ENCODE measurements at regions of chr9 and their contacts with region 1.

Region 1: GRCh38 chr9:136728080-136728547 is 14.6 kb downstream of the LCN10 start:
- DNase-seq: peak; percentile 84 to 95 (median 89)
- ATAC-seq: peak; percentile 68
- H3K4me3 ChIP-seq: peak overlapping the region; percentile 67
- H3K27ac ChIP-seq: peak overlapping the region; percentile 97
- H3K4me1 ChIP-seq: peaks cover 29 to 76% of the 10 kb centered on the region in 2 experiments; a peak in 4 of 5 replicates
- H3K27me3 ChIP-seq: no peaks in the 10 kb centered on the region
- CTCF ChIP-seq: peak; percentile 73 to 99 (median 99)
- EP300 ChIP-seq: peak; percentile 64
- POLR2A ChIP-seq: peak; percentile 98
- RAD21 ChIP-seq: peak in 1 of 2 experiments; percentile 23; a peak in 2 of 4 replicates

Region 2: GRCh38 chr9:136705564-136705963 is 22.6 kb before region 1 on chr9:
- CTCF ChIA-PET with region 1: no interaction called
- POLR2A ChIA-PET with region 1: interaction called, 31 read pairs
- in situ Hi-C with region 1: no loop called
- intact Hi-C with region 1: no loop called
- DNase-seq: no peak
- ATAC-seq: no peak
- H3K4me3 ChIP-seq: no peak overlapping the region
- H3K27ac ChIP-seq: no peak overlapping the region
- H3K4me1 ChIP-seq: peaks cover 17 to 38% of the 10 kb centered on the region in 2 experiments; a peak in 4 of 5 replicates
- H3K27me3 ChIP-seq: no peaks in the 10 kb centered on the region
- CTCF ChIP-seq: no peak
- EP300 ChIP-seq: no peak
- POLR2A ChIP-seq: no peak
- RAD21 ChIP-seq: no peak

Region 3: DNA sequence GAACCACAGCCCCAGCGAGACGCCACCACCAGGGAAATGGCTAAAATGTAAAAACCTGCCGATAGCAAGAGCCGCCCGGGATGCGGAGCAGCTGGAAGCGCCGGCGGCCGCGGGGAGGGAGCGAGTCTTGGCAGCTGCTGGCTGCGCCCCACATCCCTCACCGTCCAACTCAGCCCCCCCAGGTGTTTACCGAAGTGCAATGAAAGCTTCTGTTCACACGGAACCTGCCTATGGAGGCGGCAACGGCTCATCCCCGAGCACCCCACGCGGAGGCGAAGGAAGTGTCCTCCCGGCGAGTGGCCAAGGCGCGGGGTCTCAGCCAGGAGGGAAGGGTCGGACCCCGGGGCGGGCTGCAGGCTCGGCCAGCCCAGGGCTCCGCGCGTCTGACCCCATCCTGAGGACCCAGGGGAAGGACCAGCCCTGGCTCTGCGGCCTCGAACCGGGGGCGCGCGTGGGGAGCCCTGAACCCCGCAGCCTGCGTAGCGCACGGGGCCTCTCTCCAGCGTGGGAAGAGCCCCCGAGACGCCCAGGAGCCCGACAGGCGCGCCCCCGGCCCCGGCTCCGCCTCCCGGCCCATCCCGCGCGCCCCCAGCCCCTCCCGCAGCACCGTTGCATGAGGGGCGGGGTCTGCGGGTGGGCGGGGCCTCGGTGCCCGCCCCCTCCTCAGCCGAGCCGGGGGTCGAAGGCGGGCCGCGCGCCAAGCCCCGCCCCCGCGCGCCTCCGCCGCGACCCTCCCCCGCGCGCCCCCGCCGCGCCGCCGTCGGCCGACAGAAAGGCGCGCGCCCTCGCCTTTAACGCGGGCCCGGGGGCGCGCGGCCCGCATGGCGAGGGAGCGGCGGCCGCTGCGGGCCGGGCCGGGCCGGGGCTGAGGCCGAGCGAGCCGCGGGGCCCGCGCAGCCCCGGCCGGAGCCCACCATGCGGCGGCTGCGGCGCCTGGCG is 16.1 kb before region 1 on chr9 and contains the start of gene DIPK1B:
- CTCF ChIA-PET with region 1: no interaction called
- POLR2A ChIA-PET with region 1: interaction called, 44 read pairs
- in situ Hi-C with region 1: no loop called
- intact Hi-C with region 1: no loop called
- DNase-seq: peak; percentile 65 to 96 (median 93)
- ATAC-seq: peak; percentile 68
- H3K4me3 ChIP-seq: peak within 1 kb of the TSS; percentile 63
- H3K27ac ChIP-seq: peak within 1 kb of the TSS; percentile 62; the same call in 2 of the 3 replicates
- H3K4me1 ChIP-seq: peaks cover 15 to 65% of the 10 kb centered on the region in 2 experiments
- H3K27me3 ChIP-seq: no peaks in the 10 kb centered on the region
- CTCF ChIP-seq: no peak
- EP300 ChIP-seq: no peak
- POLR2A ChIP-seq: no peak
- RAD21 ChIP-seq: 0 out of 4 replicates have a peak, but pooled peaks of 1 of the 2 experiments have one; percentile 17
- polyA plus RNA-seq, gene DIPK1B: 0.08 to 0.21 TPM

Region 4: DNA sequence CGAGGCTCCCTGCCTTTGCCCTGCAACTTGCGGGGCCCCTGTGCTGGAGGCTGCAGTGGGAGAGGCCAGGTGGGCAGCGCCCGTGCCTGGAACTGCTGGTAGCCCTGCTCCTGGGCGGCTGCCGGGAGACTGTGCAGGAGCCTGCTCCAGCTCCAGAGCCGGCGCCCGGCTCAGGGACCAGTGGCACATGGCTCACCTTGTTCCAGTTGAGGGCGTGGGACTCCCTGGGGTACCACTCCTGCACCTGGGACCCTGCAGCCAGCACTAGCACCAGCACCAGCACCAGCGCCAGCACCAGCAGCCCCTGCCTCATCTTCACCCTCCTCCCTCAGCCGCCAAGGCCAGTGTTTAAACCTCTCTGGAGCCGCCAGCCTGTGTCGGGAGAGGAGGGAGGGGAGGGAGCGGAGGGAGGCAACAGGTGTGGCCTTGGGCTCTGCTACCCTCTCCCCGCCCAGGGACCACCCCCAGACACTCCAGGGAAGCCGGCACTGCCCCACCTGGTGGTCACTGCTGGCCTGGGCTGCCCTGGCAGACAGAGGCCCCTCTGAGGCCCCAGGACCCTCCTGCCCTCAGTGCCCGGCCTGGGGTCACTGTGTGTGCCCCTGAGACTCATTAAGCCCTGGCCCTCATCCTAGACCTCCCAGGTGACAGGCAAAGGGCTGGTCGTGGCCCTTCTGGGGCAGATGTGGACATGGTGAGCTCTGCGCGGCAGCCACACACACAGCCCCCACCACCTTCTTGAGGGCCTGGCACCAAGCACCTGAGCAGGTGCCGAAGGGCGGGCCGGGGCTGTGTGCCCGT is 14.7 kb after region 1 on chr9 and contains the start of gene LCN10:
- CTCF ChIA-PET with region 1: no interaction called
- POLR2A ChIA-PET with region 1: interaction called, 17 read pairs
- in situ Hi-C with region 1: no loop called
- intact Hi-C with region 1: no loop called
- DNase-seq: peak in 2 of 4 experiments; percentile 74 to 80
- ATAC-seq: peak; percentile 73
- H3K4me3 ChIP-seq: no peak within 1 kb of the TSS
- H3K27ac ChIP-seq: no peak within 1 kb of the TSS
- H3K4me1 ChIP-seq: peaks cover 16 to 89% of the 10 kb centered on the region in 2 experiments
- H3K27me3 ChIP-seq: peaks cover 0 to 5% of the 10 kb centered on the region in 2 experiments; a peak in 3 of 5 replicates
- CTCF ChIP-seq: peak; percentile 31 to 54 (median 37); a peak in 4 of 6 replicates
- EP300 ChIP-seq: no peak
- POLR2A ChIP-seq: no peak
- RAD21 ChIP-seq: no peak
- polyA plus RNA-seq, gene LCN10: 0.10 TPM in 1 of 2 experiments, not detected in the other

Region 5: DNA sequence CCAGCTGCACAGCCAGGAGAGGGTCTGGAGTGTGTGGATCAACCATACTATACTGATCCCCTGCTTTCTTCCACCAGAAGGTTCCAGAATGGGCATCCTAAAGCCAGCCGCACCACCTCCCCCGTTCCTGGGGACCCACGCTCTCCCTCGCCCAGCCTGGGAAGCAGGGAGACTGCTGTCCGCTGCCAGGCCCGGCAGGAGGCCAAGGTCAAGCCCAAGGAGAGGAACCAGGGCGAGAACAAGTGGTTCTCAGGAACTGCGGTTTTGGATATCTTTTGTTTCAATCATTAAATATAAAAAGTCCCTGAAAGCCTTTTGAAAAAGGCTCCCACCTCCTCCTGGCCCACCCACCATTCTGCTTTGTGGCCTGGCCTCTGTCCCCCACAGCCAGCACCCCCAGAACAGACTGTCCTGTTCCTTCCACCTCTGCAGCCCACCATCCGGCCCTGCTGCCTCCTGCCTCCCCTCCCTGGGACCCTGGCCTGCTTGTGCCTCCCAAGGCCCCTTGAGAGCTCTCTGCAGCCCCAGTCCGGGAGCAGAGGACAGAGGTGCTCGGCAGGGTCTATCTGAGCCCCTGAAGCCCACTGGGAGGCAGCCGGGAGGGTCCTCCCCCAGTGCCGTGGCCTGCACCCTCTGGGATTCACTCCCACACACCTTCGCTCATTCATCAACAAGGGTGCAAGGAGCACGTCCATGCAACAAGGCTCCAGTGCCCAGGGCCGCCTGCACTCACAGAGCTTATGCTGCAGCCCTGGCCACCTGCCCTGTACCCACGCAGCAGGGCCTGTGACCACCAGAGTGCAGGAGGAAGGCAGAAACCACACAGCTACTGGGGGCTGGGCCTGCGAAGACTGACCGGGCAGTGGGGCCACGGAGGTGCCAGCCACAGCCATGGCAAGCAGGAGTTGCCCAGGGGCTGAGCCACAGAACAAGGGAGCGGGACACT is 20.8 kb after region 1 on chr9:
- CTCF ChIA-PET with region 1: no interaction called
- POLR2A ChIA-PET with region 1: interaction called, 17 read pairs
- in situ Hi-C with region 1: no loop called
- intact Hi-C with region 1: no loop called
- DNase-seq: no peak
- ATAC-seq: no peak
- H3K4me3 ChIP-seq: no peak overlapping the region
- H3K27ac ChIP-seq: no peak overlapping the region
- H3K4me1 ChIP-seq: peaks cover 7 to 63% of the 10 kb centered on the region in 2 experiments
- H3K27me3 ChIP-seq: no peaks in the 10 kb centered on the region
- CTCF ChIP-seq: no peak
- EP300 ChIP-seq: no peak
- POLR2A ChIP-seq: no peak
- RAD21 ChIP-seq: no peak

Region 6: DNA sequence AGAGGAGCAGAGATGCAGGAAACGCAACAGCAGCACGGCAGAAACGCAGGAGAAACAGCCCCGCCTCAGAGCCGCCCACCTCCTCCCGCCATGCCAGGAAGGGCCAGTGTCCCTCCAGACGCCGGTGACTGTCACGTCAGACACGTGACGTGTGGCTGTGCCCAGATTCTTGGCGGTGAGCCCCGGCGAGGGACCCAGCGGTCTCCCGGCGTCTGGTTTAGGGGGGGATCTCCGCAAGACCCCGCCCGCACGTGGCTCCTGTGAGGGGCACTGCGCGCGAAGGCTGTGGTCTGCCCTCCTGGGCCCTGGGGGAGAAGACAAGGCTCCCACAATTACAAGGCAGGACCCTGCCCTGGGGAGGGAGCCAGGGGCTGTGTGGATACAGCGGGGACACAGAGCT is 32.3 kb after region 1 on chr9:
- CTCF ChIA-PET with region 1: no interaction called
- POLR2A ChIA-PET with region 1: interaction called, 11 read pairs
- in situ Hi-C with region 1: no loop called
- intact Hi-C with region 1: no loop called
- DNase-seq: no peak
- ATAC-seq: no peak
- H3K4me3 ChIP-seq: no peak overlapping the region
- H3K27ac ChIP-seq: no peak overlapping the region
- H3K4me1 ChIP-seq: peaks cover 8 to 78% of the 10 kb centered on the region in 2 experiments; a peak in 4 of 5 replicates
- H3K27me3 ChIP-seq: no peaks in the 10 kb centered on the region
- CTCF ChIP-seq: no peak
- EP300 ChIP-seq: no peak
- POLR2A ChIP-seq: no peak
- RAD21 ChIP-seq: no peak

Measured in K562 (cell line).